Natural killer cell (primary cell): ENCODE measurements at regions of chr15 and their contacts with region 1.

Region 1: DNA sequence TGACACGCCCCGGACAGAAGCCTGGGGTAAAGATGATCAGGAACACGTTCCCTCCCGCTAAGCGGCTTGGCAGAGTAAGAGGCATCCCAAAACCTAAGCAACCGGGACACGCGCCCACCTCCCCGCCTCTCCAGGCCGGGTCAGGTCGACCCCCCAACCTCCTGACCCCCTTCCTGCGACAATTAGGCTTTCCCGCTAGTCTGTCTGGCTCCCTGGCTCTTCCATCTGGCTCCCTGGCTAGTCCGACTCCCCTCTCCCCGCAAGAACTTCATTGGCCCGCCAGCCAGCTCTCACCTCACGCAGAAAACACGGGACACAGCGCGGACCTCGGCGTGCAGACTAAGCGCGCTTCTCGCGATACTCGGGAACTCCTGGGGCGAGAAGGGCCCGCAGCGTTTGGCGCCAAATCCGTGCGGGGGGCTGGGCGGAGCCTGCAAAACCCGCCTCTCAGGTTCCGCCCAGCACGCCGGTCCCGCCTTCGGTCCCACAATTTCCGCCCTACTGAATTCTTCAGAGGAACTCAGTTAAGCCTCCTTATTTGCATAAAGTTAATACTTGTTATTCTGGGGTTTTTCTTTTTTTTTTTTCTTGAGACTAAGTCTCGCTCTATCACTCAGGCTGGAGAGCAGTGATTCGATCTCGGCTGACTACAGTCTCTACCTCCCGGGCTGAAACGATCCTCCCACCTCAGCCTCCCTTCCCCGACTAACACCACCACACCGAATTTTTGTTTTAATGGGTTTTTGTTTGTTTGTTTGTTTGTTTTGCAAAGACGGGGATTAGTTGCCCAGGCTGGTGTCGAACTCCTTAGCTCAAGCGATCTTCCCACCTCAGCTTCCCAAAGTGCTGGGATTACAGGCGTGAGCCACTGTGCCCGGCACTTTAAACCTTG is at the start of gene TIPIN:
- DNase-seq: peak; percentile 94 to 99
- ATAC-seq: peak; percentile 96 to 99 (median 97)
- H3K4me3 ChIP-seq: peak within 1 kb of the TSS; percentile 93
- H3K4me3 Mint-ChIP-seq: peak within 1 kb of the TSS; percentile 96
- H3K27ac ChIP-seq: peak within 1 kb of the TSS; percentile 71
- H3K27ac Mint-ChIP-seq: peak within 1 kb of the TSS; percentile 90 to 98
- H3K4me1 ChIP-seq: peaks cover 14% of the 10 kb centered on the region
- H3K4me1 Mint-ChIP-seq: peaks cover 14 to 15% of the 10 kb centered on the region in 2 donors
- H3K27me3 ChIP-seq: no peaks in the 10 kb centered on the region
- H3K27me3 Mint-ChIP-seq: no peaks in the 10 kb centered on the region
- CTCF ChIP-seq: no peak
- total RNA-seq, gene TIPIN: 2.6 to 5.5 (median 5.3) TPM

Region 2: DNA sequence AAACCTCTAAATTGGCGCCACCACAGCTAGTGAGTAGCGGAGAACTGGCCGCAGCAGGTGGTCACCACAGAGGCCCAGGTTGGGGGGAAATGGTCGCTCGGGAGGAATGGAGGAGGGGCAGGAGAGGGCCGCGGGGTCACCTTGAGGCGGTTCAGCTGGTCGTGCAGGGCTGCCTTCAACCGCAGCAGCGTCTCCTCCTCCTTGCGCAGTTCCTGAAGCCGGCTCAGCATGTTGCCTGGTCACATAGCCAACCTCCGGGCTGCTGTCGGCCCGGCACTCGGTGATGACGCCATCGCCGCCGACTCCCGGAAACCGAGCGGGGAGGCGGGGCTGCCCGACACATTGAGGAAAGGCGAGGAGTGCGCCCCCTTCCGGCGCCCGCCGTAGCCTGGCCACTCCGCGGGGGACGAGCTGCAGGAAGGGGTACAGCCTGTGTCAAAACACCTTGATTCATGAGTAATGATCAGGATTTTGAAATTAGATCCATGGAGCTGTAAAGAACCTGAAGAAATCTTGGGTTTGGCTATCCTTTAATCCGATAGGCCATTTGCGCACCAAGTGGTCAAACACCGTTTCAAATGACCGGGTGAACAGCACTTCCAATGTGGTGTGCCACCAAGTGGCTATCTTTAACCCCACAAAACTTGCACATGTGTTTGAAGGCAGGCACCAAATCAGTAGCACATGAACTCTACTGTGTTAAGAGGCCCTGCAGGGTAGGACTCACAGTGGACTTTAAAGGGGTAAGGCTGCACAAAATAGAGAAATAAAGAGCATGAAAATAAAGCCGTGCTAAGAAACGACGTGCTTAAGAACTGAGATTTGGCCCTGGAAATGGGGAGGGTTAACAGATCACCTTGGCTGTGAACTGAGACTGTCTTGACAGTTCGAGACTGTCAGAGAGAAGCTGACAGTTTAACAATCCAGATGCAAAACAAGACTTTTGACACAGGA is 141.2 kb after region 1 on chr15 and contains the start of gene SNAPC5:
- intact Hi-C with region 1: loop called (anchors 1 kb)
- DNase-seq: peak; percentile 98
- ATAC-seq: peak; percentile 95 to 98 (median 96)
- H3K4me3 ChIP-seq: peak within 1 kb of the TSS; percentile 79
- H3K4me3 Mint-ChIP-seq: peak within 1 kb of the TSS; percentile 92
- H3K27ac ChIP-seq: peak within 1 kb of the TSS; percentile 82
- H3K27ac Mint-ChIP-seq: peak within 1 kb of the TSS; percentile 93 to 97
- H3K4me1 ChIP-seq: peaks cover 25% of the 10 kb centered on the region
- H3K4me1 Mint-ChIP-seq: peaks cover 18 to 36% of the 10 kb centered on the region in 2 donors
- H3K27me3 ChIP-seq: no peaks in the 10 kb centered on the region
- H3K27me3 Mint-ChIP-seq: no peaks in the 10 kb centered on the region
- CTCF ChIP-seq: peak; percentile 99
- total RNA-seq, gene SNAPC5: 17.2 to 25.2 (median 24.3) TPM

Region 3: DNA sequence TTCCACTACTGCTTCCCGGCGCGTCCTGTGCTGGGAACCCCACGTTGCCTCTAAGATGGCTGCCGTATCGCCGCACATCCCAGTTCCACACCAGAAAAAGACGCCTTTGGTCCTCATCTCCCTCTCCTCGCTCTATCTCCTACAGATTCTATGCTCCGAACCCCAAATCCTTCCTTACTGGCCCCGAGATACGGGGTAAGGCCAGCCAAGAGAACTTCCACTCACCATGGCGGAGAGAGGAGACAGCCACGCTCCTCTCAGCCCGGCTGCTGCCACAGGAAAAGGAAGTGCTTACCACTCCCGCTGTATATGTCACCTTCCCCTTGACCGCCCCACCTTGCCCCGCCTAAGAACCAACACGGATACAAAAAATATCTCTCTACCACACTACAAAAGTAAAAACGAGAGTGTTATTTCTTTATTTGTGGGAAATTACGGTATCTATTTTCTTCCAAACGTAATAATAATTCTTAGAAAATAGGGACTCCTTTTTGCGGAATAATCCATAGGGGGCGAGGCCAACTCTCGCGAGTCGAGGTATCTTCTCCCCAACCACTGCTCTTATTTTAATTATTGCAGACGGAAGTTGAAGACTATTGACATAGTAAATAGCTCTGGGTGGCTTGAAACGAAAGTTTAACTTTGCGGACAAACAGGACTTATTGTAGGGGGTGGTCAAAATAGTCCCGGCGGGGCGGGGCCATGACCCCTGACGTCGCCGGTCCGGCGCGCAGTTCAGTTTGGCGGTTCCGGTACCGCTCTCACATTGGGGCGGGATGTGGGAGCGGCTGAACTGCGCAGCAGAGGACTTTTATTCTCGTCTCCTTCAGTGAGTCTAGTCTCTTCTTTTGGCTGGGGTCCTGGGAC is 148.2 kb after region 1 on chr15 and contains the starts of genes RPL4 and ZWILCH:
- intact Hi-C with region 1: loop called (anchors 2 kb)
- DNase-seq: peak; percentile 79 to 91
- ATAC-seq: peak; percentile 84 to 95 (median 87)
- H3K4me3 ChIP-seq: peak within 1 kb of the TSS; percentile 92
- H3K4me3 Mint-ChIP-seq: peak within 1 kb of the TSS; percentile 100
- H3K27ac ChIP-seq: peak within 1 kb of the TSS; percentile 97
- H3K27ac Mint-ChIP-seq: peak within 1 kb of the TSS; percentile 90 to 97
- H3K4me1 ChIP-seq: peaks cover 20% of the 10 kb centered on the region
- H3K4me1 Mint-ChIP-seq: peaks cover 35 to 37% of the 10 kb centered on the region in 2 donors
- H3K27me3 ChIP-seq: no peaks in the 10 kb centered on the region
- H3K27me3 Mint-ChIP-seq: no peaks in the 10 kb centered on the region
- CTCF ChIP-seq: no peak
- total RNA-seq, gene RPL4: 1,109 to 1,293 (median 1,293) TPM
- total RNA-seq, gene ZWILCH: 8.7 to 9.9 (median 9.7) TPM